ENCODE measurements at regions of chrX and their contacts with region 1.

Region 1: DNA sequence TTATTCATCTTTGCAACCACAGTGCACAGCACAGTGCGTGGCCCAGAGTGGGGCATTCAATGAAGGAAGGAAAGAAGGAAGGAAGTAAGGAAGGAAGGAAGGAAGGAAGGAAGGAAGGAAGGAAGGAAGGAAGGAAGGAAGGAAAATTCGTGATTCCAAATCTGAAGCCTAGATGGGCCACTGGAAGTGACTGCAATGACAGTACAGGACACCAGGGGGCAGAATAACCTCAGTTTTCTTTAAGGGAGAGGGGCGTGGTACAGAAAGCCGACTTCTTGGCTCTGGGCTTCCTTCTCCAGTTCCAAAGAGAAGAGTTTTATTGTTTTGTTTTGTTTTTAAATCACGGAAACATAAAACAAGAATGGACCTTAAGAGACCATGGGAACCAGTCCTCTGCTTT is 47.8 kb downstream of the APLN start:
- DNase-seq: peak; percentile 81
- H3K4me3 ChIP-seq: no peak overlapping the region
- H3K27ac ChIP-seq: no peak overlapping the region
- H3K4me1 ChIP-seq: no peaks in the 10 kb centered on the region
- H3K27me3 ChIP-seq: no peaks in the 10 kb centered on the region
- CTCF ChIP-seq: peak; percentile 76

Region 2: GRCh38 chrX:129726307-129727111 is 119.6 kb after region 1 on chrX:
- intact Hi-C with region 1: loop called (anchors 2 kb)
- DNase-seq: peak; percentile 56
- H3K4me3 ChIP-seq: no peak overlapping the region
- H3K27ac ChIP-seq: no peak overlapping the region
- H3K4me1 ChIP-seq: no peaks in the 10 kb centered on the region
- H3K27me3 ChIP-seq: no peaks in the 10 kb centered on the region
- CTCF ChIP-seq: peak; percentile 44

Region 3: DNA sequence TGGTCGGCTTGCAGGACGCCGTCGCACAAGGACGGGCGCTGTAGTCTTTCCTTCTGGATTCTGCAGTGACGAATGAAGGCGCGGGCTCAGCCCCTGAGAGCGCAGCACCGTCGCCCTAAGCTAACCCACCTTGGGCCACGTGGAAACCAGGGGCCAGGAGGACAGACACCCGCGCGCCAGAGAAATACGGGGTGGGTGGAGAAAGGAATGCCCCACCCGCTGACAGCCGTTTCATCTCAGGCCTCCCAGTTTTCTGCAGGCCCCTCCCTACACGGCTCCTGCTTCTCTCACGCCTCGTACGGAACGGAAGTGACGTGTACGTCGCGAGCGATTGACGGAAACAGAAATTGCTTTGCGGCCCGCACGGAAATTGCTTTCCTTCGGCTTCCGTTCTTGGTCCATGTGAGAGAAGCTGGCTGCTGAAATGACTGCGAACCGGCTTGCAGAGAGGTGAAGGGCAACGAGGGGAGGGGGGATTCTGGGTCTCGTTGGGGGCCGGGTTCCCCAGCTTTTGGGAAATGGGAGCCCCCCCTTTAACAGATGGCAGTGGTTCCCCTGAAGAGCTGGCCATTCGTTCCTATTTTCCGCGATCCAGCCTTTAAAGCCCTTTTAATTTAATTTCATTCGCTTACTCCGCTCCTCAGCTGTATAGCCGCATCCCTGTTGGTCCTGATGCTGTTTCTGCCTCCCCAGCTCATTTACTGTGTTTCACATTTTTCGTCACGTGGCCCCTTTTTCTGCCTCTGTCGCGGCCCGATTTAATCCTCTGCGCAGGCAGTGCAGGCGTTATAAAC is 299.1 kb after region 1 on chrX and contains the start of gene UTP14A:
- intact Hi-C with region 1: loop called (anchors 10 kb)
- DNase-seq: peak; percentile 87
- H3K4me3 ChIP-seq: peak within 1 kb of the TSS; percentile 51
- H3K27ac ChIP-seq: peak within 1 kb of the TSS; percentile 10
- H3K4me1 ChIP-seq: no peaks in the 10 kb centered on the region
- H3K27me3 ChIP-seq: no peaks in the 10 kb centered on the region
- CTCF ChIP-seq: no peak
- total RNA-seq, gene UTP14A: 9.9 to 17.4 TPM

Region 4: DNA sequence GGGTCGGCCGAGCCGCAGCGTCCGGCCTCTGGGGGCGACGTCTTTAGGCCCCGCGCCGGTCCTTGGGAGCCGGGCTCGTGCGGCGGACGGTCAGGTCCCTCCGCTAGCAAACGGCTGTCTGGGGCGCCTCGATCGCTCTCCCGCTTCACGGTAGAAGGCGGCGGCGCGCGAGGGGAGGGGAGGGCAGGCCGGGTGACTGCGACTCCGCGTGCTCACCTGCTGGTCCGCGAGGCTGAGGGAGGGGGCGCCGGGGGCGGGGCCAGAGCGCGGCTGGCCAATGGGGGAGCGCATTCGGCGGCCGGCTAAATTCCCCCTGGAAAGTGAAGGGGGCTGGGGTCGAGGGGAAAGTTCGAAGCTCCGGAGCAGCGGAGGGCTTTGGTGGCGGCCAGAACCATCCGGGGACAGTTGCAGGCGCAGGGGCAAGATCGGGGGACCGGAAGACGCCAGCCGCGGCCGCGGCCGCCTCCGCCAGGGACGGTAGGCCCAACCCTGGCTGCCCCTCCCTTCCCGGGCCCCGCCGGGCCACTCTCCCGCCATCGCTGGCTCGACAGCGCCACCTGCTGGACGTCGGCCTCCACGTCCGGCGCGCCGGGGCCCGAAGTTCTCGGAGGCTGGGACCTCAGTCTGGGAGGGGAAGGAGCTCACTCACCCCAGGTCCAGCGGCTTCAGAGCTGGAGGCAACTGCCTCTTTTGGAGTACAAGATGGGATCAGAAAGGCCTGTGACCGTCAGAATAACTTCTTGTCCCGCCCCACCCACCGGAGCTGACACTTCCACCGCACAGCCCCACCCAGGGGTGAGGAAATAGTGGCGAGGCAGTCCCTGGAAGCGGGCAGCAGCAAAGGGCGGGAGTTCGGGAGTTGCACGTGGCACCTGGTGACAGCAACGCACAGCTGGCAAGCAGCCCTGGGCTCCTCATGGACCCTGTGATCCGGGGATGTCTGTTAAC is 453.5 kb after region 1 on chrX:
- intact Hi-C with region 1: loop called (anchors 10 kb)
- DNase-seq: peak; percentile 86
- H3K4me3 ChIP-seq: peak overlapping the region; percentile 27
- H3K27ac ChIP-seq: no peak overlapping the region
- H3K4me1 ChIP-seq: no peaks in the 10 kb centered on the region
- H3K27me3 ChIP-seq: no peaks in the 10 kb centered on the region
- CTCF ChIP-seq: peak; percentile 79

Region 5: DNA sequence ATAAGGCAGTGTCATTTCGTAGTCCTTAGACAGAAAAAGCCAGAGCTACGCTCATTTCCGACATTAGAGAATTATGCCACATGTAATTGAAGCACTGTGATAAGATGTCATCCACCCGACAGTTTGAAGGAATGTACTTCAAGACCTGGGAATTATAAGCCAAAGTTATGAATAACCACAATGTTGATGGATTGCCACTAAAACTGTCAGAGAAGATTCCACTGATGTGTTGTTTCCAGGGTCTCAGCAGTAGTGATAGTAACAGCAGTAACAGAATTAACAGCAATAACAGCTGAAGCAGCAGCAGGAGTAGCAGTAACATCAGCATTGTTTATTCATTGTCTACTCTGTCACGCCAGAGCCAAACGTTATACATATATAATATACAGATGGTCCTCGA is 589.5 kb after region 1 on chrX:
- intact Hi-C with region 1: loop called (anchors 10 kb)
- DNase-seq: no peak
- H3K4me3 ChIP-seq: no peak overlapping the region
- H3K27ac ChIP-seq: no peak overlapping the region
- H3K4me1 ChIP-seq: no peaks in the 10 kb centered on the region
- H3K27me3 ChIP-seq: no peaks in the 10 kb centered on the region
- CTCF ChIP-seq: no peak